Activated CD8-positive, alpha-beta T cell treated with anti-CD3 and anti-CD28 coated beads for 36 hours (primary cell): ENCODE measurements at regions of chr2 and their contacts with region 1.

Region 1: GRCh38 chr2:191574232-191574631 is 103.7 kb upstream of the NABP1 start:
- DNase-seq: no peak
- ATAC-seq: no peak
- H3K4me3 Mint-ChIP-seq: no peak overlapping the region
- H3K27ac Mint-ChIP-seq: no peak overlapping the region
- H3K4me1 Mint-ChIP-seq: peaks cover 42% of the 10 kb centered on the region
- H3K27me3 Mint-ChIP-seq: peaks cover 4% of the 10 kb centered on the region
- CTCF ChIP-seq: no peak

Region 2: DNA sequence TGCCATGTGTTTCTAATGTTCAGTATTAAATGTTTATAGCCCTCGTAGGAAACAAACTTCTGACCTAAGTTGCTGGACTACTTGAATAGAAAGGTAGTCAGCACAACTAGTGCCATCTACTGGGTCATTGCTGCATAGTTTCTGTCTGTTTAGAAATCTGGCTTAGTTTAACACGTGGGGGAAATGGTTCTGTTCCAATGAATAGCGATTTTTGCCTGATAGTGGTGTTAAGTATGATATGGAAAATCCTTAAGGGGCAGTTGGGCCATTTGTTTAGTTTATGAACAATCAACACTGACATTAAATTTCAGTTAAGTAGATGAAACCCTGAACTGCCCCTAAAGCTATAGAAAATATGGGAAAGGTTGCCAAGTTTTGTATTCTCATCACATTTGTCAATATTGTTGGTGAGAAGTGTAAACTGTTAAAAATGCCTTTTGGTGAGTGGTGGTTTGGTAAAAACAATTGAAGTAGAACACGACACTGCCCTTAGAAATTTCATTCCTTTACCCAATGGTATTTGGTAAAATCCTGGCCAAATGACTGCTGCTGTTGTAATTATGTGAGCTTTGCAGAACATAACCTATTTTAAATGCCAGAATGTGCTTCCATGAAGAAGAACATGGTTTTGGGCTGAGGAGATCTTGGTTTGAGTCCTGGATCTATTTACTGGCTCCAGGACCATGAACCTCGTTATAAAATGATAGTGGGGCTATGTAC is 116.9 kb after region 1 on chr2:
- CTCF ChIA-PET with region 1: interaction called, 18 read pairs
- POLR2A ChIA-PET with region 1: interaction called, 3 read pairs
- intact Hi-C with region 1: loop called (anchors 2 kb)
- DNase-seq: peak; percentile 72
- ATAC-seq: peak; percentile 74
- H3K4me3 Mint-ChIP-seq: no peak overlapping the region
- H3K27ac Mint-ChIP-seq: no peak overlapping the region
- H3K4me1 Mint-ChIP-seq: peaks cover 57% of the 10 kb centered on the region
- H3K27me3 Mint-ChIP-seq: no peaks in the 10 kb centered on the region
- CTCF ChIP-seq: peak; percentile 60